ENCODE measurements at regions of chr19 and their contacts with region 1.

Region 1: GRCh38 chr19:11346092-11346940 is at the starts of genes CCDC159 and TMEM205:
- DNase-seq: peak; percentile 98
- H3K4me3 Mint-ChIP-seq: peak within 1 kb of the TSS; percentile 89
- H3K27ac Mint-ChIP-seq: peak within 1 kb of the TSS; percentile 93
- H3K4me1 Mint-ChIP-seq: peaks cover 28% of the 10 kb centered on the region
- H3K27me3 Mint-ChIP-seq: no peaks in the 10 kb centered on the region
- total RNA-seq, gene CCDC159: 10.7 and 14.4 TPM in 2 replicates
- total RNA-seq, gene TMEM205: 26.6 and 31.2 TPM in 2 replicates

Region 2: DNA sequence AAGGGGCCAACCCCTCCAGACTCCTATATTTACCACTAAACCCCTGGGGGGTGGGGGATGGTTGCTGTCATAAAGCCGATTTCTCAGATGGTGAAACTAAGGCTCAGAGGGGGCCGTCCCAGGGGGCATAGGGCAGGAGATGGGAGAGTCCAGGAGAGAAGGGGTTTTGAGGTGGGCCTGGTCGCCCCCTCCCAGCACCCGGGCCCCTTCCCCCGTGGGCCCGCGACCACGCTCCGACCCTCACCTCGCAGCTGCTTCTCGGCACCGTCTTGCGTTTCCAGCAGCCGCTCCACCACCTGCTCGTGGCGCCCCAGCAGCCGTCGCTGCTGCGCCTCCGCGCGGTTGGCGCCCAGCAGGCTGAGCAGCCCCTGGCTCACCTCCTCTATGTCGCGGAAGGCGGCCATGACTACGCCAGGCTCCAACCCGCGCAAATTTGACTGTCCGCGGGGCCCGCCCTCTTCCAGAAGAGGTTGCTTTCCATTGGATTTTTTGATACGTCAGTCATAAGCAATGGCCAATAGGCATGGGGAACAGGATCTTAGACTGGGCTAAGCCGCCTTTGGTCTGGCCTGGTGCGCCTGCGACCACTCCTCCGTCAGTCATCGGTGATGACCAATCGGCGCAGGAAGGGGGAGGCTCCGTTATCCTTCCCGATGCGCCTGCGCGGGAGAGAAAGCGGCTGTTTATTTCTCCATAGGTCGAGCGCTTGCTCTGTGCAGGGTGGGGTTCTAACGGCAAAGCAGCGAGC is 190.8 kb before region 1 on chr19 and contains the start of gene SPC24:
- intact Hi-C with region 1: loop called (anchors 1 kb)
- DNase-seq: peak; percentile 94
- H3K4me3 Mint-ChIP-seq: peak within 1 kb of the TSS; percentile 84
- H3K27ac Mint-ChIP-seq: peak within 1 kb of the TSS; percentile 89
- H3K4me1 Mint-ChIP-seq: peaks cover 7% of the 10 kb centered on the region
- H3K27me3 Mint-ChIP-seq: no peaks in the 10 kb centered on the region
- total RNA-seq, gene SPC24: 30.3 and 30.4 TPM in 2 replicates

Region 3: GRCh38 chr19:11293433-11294389 is 52.6 kb before region 1 on chr19:
- intact Hi-C with region 1: loop called (anchors 5 kb)
- DNase-seq: peak; percentile 72
- H3K4me3 Mint-ChIP-seq: peak overlapping the region; percentile 49
- H3K27ac Mint-ChIP-seq: no peak overlapping the region
- H3K4me1 Mint-ChIP-seq: peaks cover 10% of the 10 kb centered on the region
- H3K27me3 Mint-ChIP-seq: peaks cover 20% of the 10 kb centered on the region

Region 4: DNA sequence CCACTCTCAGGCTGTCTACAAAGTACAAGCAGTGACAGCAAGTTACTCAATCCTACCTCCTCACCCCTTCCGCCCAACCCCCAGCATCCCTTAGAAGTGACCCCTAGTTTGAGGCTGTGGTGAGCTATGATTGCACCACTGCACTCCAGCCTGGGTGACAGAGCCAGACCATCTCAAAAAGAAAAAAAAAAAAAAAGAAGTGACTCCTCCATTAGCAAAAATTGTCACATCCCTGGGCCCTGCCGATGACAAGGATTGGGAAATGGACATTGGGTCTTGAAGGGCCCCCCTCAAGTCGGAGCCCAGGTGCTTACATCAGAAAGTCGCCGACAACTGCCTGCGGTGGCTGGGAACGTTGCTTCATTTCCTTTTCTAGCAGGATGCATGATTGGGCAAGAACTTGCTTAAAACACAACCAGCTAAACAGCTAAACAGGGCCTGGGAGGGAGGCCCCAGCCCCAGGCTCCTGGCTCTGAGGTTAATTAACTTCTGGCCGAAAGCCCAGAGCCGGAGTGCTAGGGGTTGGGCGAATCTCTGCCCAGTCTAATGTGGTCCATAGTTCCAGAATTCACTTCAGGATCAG is 22.1 kb before region 1 on chr19:
- intact Hi-C with region 1: loop called (anchors 1 kb)
- DNase-seq: peak; percentile 37
- H3K4me3 Mint-ChIP-seq: peak overlapping the region; percentile 77
- H3K27ac Mint-ChIP-seq: peak overlapping the region; percentile 89
- H3K4me1 Mint-ChIP-seq: peaks cover 16% of the 10 kb centered on the region
- H3K27me3 Mint-ChIP-seq: no peaks in the 10 kb centered on the region

Region 5: GRCh38 chr19:11380653-11381534 is 34.6 kb after region 1 on chr19:
- intact Hi-C with region 1: loop called (anchors 1 kb)
- DNase-seq: peak; percentile 96
- H3K4me3 Mint-ChIP-seq: peak overlapping the region; percentile 88
- H3K27ac Mint-ChIP-seq: peak overlapping the region; percentile 100
- H3K4me1 Mint-ChIP-seq: peaks cover 32% of the 10 kb centered on the region
- H3K27me3 Mint-ChIP-seq: peaks cover 16% of the 10 kb centered on the region

Measured in activated T-helper 1 cell treated with anti-CD3 and anti-CD28 coated beads, Interleukin-12 subunit alpha, Interleukin-12 subunit beta, Interleukin-2, Interleukin-4 antibody, amounts not matched to agents 30 ng/mL and 10 ng/mL and 1 ng/mL, durations not matched to agents 14 hours and 24 hours and 36 hours (primary cell).